Activated T-helper 1 cell treated with anti-CD3 and anti-CD28 coated beads, Interleukin-12 subunit alpha, Interleukin-12 subunit beta, Interleukin-2, Interleukin-4 antibody, amounts not matched to agents 30 ng/mL and 10 ng/mL and 1 ng/mL, durations not matched to agents 14 hours and 24 hours and 36 hours (primary cell): ENCODE measurements at regions of chr6 and their contacts with region 1.

Region 1: DNA sequence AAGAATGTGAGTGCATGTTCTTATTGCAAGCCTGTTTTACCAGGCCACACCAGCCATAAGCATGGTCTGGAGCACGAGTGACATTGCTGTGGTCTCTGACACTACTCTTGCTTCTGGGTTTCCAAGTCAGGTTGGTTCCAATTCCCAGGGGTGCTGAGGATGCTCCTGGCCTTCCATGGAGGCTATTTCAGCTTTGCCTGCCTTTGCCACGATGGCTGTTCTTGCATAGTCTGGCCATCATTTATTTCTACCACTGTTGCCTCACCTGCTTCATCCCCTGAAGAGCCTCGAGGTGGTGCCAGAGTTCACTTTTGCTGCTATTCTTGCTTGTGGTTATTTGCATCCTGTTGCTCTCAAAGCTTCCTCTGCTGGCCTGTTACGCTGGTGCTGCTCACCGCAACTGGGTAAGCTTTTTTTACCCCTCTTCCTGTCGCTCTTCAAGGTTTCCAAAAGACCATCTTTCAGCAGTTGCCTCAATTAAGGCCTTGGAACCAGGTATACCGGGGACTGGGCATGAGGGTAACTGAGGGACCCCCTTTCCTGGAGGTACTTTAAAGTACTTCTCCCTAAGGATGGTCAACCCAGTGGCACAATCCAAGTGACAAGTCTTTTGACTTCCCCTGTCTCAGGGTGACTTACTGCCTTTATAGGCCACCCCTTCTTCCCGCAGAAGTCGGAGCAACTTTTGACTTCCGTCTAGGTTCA is 64.5 kb downstream of the AKAP7 start:
- DNase-seq: peak; percentile 71
- H3K4me3 Mint-ChIP-seq: peak overlapping the region; percentile 74
- H3K27ac Mint-ChIP-seq: peak overlapping the region; percentile 90
- H3K4me1 Mint-ChIP-seq: peaks cover 55% of the 10 kb centered on the region
- H3K27me3 Mint-ChIP-seq: peaks cover 3% of the 10 kb centered on the region

Region 2: GRCh38 chr6:131013495-131013894 is 186.2 kb before region 1 on chr6:
- intact Hi-C with region 1: no loop called
- DNase-seq: no peak
- H3K4me3 Mint-ChIP-seq: no peak overlapping the region
- H3K27ac Mint-ChIP-seq: no peak overlapping the region
- H3K4me1 Mint-ChIP-seq: no peaks in the 10 kb centered on the region
- H3K27me3 Mint-ChIP-seq: peaks cover 3% of the 10 kb centered on the region

Region 3: DNA sequence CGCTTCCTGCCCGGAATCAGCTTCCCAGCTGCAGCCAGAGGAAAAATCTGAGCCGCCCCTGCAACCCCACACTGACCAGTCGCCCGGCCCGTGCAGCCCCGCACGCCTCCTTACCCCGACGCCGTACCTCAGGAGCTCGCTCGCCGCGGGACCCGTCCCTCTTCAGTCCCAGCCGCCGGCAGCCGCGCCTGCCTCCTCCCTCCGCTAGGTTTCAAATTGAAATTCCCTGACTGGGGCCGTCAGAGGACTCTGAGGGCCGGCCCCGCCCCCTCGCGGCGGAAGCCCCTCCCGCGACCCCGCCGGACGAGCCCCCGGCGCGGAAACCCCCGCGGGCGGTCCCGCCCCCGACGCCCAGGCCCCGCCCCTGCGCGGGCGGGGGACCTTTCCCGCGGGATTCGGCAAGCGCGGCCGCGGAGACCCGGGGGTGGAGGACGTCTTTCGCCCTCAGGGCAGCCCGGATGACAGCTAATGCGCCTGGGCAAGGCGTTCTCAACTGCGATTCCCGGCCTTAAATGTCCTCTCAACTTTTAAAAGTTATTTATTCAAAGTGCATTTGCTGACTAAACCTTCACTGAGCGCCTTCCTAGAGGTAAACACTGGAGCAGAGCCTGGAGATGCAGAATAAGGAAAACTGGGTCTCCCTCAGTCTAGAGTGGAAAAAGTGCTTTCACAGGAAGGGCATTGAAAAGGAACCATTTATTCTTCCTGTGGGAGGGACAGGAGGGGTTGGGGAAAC is 136.5 kb before region 1 on chr6 and contains the start of gene EPB41L2:
- intact Hi-C with region 1: loop called (anchors 2 kb)
- DNase-seq: peak; percentile 76
- H3K4me3 Mint-ChIP-seq: peak within 1 kb of the TSS; percentile 81
- H3K27ac Mint-ChIP-seq: peak within 1 kb of the TSS; percentile 14
- H3K4me1 Mint-ChIP-seq: peaks cover 21% of the 10 kb centered on the region
- H3K27me3 Mint-ChIP-seq: peaks cover 15% of the 10 kb centered on the region
- total RNA-seq, gene EPB41L2: 17.7 and 18.7 TPM in 2 replicates

Region 4: DNA sequence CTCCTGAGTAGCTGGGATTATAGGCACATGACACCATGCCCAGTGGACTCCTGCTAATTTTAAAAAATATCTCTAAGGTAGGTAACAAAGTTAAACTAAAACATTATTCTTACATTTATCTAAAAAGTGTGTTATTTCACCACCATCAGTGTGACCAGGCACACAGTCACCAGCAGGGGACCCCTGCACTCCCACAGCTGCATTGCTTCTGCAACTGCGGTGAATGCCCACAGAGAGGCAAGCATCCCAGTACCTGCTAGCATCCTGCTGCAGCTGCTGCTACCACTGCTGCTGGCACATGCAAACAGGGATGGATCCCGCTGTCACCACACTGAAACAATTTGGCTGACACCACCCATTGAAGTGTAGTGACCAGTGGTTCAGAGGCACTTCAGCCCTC is 114.7 kb before region 1 on chr6:
- intact Hi-C with region 1: no loop called
- DNase-seq: no peak
- H3K4me3 Mint-ChIP-seq: no peak overlapping the region
- H3K27ac Mint-ChIP-seq: no peak overlapping the region
- H3K4me1 Mint-ChIP-seq: no peaks in the 10 kb centered on the region
- H3K27me3 Mint-ChIP-seq: peaks cover 8% of the 10 kb centered on the region

Region 5: GRCh38 chr6:131281471-131282270 is 82.0 kb after region 1 on chr6:
- intact Hi-C with region 1: loop called (anchors 1 kb)
- DNase-seq: peak; percentile 56
- H3K4me3 Mint-ChIP-seq: peak overlapping the region; percentile 79
- H3K27ac Mint-ChIP-seq: peak overlapping the region; percentile 95
- H3K4me1 Mint-ChIP-seq: peaks cover 19% of the 10 kb centered on the region
- H3K27me3 Mint-ChIP-seq: no peaks in the 10 kb centered on the region

Region 6: DNA sequence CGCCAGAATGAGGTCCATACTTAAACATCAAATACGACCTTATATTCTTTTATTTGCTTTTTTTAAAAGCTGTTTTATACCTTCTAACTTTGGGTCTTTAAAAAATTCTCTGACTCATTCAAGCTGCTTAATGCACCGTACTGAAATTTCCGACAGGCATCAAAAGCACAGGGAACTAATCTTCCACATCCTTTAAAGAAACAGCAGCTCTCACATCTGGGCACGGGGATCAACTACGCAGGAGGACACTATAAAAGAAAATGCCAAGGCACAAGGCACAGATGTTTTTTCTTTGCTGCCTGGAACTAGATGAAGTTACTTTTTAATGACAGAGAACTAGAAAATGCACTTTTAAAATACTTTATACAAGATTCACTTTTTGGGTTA is 260.9 kb after region 1 on chr6:
- intact Hi-C with region 1: loop called (anchors 2 kb)
- DNase-seq: no peak
- H3K4me3 Mint-ChIP-seq: no peak overlapping the region
- H3K27ac Mint-ChIP-seq: no peak overlapping the region
- H3K4me1 Mint-ChIP-seq: no peaks in the 10 kb centered on the region
- H3K27me3 Mint-ChIP-seq: peaks cover 1% of the 10 kb centered on the region

Region 7: DNA sequence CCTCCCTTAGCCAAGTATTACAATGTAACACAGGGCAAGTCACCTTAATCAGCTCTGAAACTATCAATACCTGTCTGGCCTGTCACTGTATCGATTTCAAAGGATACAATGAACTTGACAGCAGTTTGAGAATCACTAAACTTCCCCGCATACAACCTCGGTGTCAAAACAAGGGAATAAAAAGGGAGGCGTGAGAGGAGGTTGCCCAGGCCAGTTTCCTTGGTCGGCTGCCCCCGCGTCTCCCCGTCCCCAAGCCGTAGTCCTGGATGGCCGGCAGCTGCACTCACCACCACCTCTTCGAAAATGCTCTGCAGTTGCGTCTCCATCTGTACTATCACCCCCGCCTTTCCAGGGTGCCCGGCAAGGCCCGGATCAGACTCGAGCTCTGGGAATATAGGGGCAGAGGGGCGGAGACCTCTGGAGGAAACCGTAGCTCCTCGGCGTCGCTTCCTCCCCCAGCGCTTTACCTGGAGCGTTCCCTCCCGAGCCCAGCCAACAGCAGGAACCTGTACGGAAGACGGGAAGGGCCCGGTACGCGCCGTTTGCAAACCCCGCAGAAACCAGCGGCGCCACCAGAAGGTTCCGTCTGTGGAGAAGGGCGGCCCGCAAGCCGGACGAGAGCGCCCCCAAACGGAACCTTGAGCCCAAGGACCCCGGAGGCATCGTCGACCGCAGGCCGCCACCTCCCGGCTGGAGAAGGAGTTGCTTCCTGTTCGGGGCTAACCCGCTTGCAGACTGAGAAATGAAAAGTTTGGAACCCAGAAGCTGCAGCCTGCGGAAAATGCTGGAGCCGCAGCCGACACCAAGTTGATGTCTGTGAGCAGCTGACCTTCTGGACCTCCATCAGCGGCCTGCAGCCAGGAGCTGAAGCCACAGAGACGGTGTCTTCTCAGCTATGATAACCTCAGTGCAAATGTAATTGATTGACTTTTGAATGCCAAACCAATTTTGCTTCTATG is 428.3 kb after region 1 on chr6 and contains the start of gene MED23:
- intact Hi-C with region 1: loop called (anchors 1 kb)
- DNase-seq: peak; percentile 92
- H3K4me3 Mint-ChIP-seq: peak within 1 kb of the TSS; percentile 99
- H3K27ac Mint-ChIP-seq: peak within 1 kb of the TSS; percentile 94
- H3K4me1 Mint-ChIP-seq: peaks cover 36% of the 10 kb centered on the region
- H3K27me3 Mint-ChIP-seq: no peaks in the 10 kb centered on the region
- total RNA-seq, gene MED23: 34.0 and 36.3 TPM in 2 replicates